Activated CD4-positive, alpha-beta T cell treated with anti-CD3 and anti-CD28 coated beads, Interleukin-2, amount 10 ng/mL, durations not matched to agents 24 days and 14 days (primary cell): ENCODE measurements at regions of chr13 and their contacts with region 1.

Region 1: DNA sequence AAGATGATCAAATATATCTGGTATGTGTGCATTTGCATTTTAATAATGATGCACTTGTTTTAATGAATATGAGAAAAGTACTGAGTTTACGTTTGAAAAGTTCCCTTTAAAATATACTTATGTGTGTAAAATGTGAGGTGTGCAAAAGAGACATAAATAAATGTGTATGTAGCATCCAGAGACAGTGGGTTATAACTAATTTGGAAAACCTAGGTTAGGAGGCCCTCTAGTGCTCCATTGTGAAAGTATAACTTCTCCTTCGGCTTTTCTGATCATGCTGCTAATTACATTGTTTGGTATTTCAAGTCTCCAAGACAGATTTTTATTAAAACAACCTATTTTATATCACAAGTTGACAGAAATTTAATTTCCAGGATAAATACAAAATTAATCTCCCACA is 30.1 kb downstream of the SCEL start:
- DNase-seq: no peak
- H3K4me3 Mint-ChIP-seq: no peak overlapping the region
- H3K27ac Mint-ChIP-seq: no peak overlapping the region
- H3K4me1 Mint-ChIP-seq: no peaks in the 10 kb centered on the region
- H3K27me3 Mint-ChIP-seq: peaks cover 7% of the 10 kb centered on the region

Region 2: GRCh38 chr13:77338961-77339401 is 226.7 kb before region 1 on chr13:
- intact Hi-C with region 1: loop called (anchors 10 kb)
- DNase-seq: peak; percentile 65
- H3K4me3 Mint-ChIP-seq: no peak overlapping the region
- H3K27ac Mint-ChIP-seq: no peak overlapping the region
- H3K4me1 Mint-ChIP-seq: peaks cover 17% of the 10 kb centered on the region
- H3K27me3 Mint-ChIP-seq: peaks cover 3% of the 10 kb centered on the region

Region 3: DNA sequence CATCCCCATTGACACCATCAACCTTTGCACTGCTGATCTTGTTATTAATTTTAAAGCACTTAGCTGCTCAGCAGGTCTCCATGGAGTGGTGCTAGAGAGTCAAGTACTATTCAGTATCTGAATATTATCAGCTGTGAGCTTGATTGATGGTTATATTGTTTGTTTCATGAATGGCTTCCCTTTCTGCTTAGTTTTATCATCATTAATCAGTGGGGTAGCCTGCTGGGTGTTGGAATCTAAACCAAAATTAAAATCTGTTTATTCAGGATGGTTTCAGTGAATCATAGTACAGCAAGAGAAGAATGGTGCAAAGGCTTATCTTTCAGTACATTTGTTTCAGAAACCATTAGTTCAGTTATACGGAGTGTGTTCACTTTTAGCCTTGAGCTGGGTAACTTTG is 72.7 kb before region 1 on chr13:
- intact Hi-C with region 1: loop called (anchors 5 kb)
- DNase-seq: no peak
- H3K4me3 Mint-ChIP-seq: no peak overlapping the region
- H3K27ac Mint-ChIP-seq: no peak overlapping the region
- H3K4me1 Mint-ChIP-seq: no peaks in the 10 kb centered on the region
- H3K27me3 Mint-ChIP-seq: no peaks in the 10 kb centered on the region